OCI-LY7 (cell line): ENCODE measurements at regions of chr17 and their contacts with region 1.

Region 1: GRCh38 chr17:63697341-63698286 is 2.3 kb downstream of the LIMD2 start:
- DNase-seq: peak; percentile 91
- H3K4me3 ChIP-seq: peak overlapping the region; percentile 89
- H3K27ac ChIP-seq: peak overlapping the region; percentile 95
- H3K4me1 ChIP-seq: peaks cover 61% of the 10 kb centered on the region
- CTCF ChIP-seq: peak; percentile 85

Region 2: DNA sequence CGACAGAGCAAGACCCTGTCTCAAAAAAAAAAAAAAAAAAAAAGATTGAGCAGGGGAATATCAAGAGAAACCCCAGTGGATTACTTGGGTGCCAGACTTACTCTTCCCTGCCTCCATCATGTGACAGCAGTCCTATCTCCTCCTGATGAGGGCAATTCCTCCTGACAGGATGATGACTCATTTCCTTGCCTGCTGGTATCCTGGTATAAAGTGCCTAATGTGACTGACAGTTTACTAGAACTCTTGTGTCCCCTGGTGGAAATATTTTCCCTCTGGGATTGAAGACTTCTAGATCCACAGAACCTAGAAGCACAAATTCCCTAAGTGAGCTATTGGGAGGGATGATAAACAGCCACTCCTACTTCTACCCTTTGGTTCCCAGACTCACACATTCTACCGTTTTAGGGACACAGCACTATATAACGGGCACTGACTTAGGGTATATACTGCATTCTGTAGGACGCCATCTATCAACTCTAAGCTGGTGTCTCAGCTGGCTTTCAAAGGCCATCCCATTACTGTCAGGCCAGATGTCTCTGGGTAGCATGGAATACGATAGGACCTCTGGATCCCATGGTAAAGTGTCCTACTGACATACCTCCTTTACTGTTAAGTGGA is 1518.0 kb before region 1 on chr17:
- CTCF ChIA-PET with region 1: no interaction called
- POLR2A ChIA-PET with region 1: interaction called, 10 read pairs
- intact Hi-C with region 1: no loop called
- DNase-seq: no peak
- H3K4me3 ChIP-seq: no peak overlapping the region
- H3K27ac ChIP-seq: no peak overlapping the region
- H3K4me1 ChIP-seq: no peaks in the 10 kb centered on the region
- CTCF ChIP-seq: no peak

Region 3: GRCh38 chr17:63549946-63550807 is 147.4 kb before region 1 on chr17 and contains the start of gene DCAF7:
- CTCF ChIA-PET with region 1: no interaction called
- POLR2A ChIA-PET with region 1: no interaction called
- intact Hi-C with region 1: loop called (anchors 2 kb)
- DNase-seq: peak; percentile 100
- H3K4me3 ChIP-seq: peak within 1 kb of the TSS; percentile 94
- H3K27ac ChIP-seq: peak within 1 kb of the TSS; percentile 89
- H3K4me1 ChIP-seq: peaks cover 16% of the 10 kb centered on the region
- CTCF ChIP-seq: no peak
- total RNA-seq, gene DCAF7: 35.4 and 46.4 TPM in 2 replicates

Region 4: GRCh38 chr17:63741221-63742049 is 43.8 kb after region 1 on chr17 and contains the start of gene STRADA:
- CTCF ChIA-PET with region 1: no interaction called
- POLR2A ChIA-PET with region 1: interaction called, 7 read pairs
- intact Hi-C with region 1: loop called (anchors 1 kb)
- DNase-seq: peak; percentile 99
- H3K4me3 ChIP-seq: peak within 1 kb of the TSS; percentile 98
- H3K27ac ChIP-seq: peak within 1 kb of the TSS; percentile 98
- H3K4me1 ChIP-seq: peaks cover 61% of the 10 kb centered on the region
- CTCF ChIP-seq: no peak
- total RNA-seq, gene STRADA: 31.9 and 37.2 TPM in 2 replicates

Region 5: GRCh38 chr17:63792055-63792725 is 94.6 kb after region 1 on chr17:
- CTCF ChIA-PET with region 1: no interaction called
- POLR2A ChIA-PET with region 1: no interaction called
- intact Hi-C with region 1: loop called (anchors 5 kb)
- DNase-seq: no peak
- H3K4me3 ChIP-seq: no peak overlapping the region
- H3K27ac ChIP-seq: no peak overlapping the region
- H3K4me1 ChIP-seq: no peaks in the 10 kb centered on the region
- CTCF ChIP-seq: no peak

Region 6: GRCh38 chr17:63842540-63843386 is 145.1 kb after region 1 on chr17 and contains the start of gene SMARCD2:
- CTCF ChIA-PET with region 1: interaction called, 3 read pairs
- POLR2A ChIA-PET with region 1: interaction called, 6 read pairs
- intact Hi-C with region 1: loop called (anchors 1 kb)
- DNase-seq: peak; percentile 98
- H3K4me3 ChIP-seq: peak within 1 kb of the TSS; percentile 99
- H3K27ac ChIP-seq: peak within 1 kb of the TSS; percentile 97
- H3K4me1 ChIP-seq: peaks cover 48% of the 10 kb centered on the region
- CTCF ChIP-seq: no peak
- total RNA-seq, gene SMARCD2: 112 and 120 TPM in 2 replicates